PC-3 (cell line): ENCODE measurements at regions of chr11 and their contacts with region 1.

Region 1: GRCh38 chr11:108121274-108122155 is at the start of gene ACAT1:
- DNase-seq: peak; percentile 98
- ATAC-seq: peak; percentile 96
- H3K4me3 ChIP-seq: peak within 1 kb of the TSS; percentile 74
- H3K27ac ChIP-seq: peak within 1 kb of the TSS; percentile 21
- H3K4me1 ChIP-seq: peaks cover 24% of the 10 kb centered on the region
- H3K27me3 ChIP-seq: no peaks in the 10 kb centered on the region
- CTCF ChIP-seq: no peak
- total RNA-seq, gene ACAT1: 180 and 212 TPM in 2 replicates

Region 2: GRCh38 chr11:108135845-108136544 is 14.5 kb after region 1 on chr11:
- CTCF ChIA-PET with region 1: no interaction called
- POLR2A ChIA-PET with region 1: no interaction called
- intact Hi-C with region 1: no loop called
- DNase-seq: peak; percentile 57
- ATAC-seq: peak; percentile 49
- H3K4me3 ChIP-seq: no peak overlapping the region
- H3K27ac ChIP-seq: no peak overlapping the region
- H3K4me1 ChIP-seq: 0 out of 2 replicates have a peak, but pooled peaks cover 3% of the 10 kb centered on the region
- H3K27me3 ChIP-seq: no peaks in the 10 kb centered on the region
- CTCF ChIP-seq: peak; percentile 59

Region 3: DNA sequence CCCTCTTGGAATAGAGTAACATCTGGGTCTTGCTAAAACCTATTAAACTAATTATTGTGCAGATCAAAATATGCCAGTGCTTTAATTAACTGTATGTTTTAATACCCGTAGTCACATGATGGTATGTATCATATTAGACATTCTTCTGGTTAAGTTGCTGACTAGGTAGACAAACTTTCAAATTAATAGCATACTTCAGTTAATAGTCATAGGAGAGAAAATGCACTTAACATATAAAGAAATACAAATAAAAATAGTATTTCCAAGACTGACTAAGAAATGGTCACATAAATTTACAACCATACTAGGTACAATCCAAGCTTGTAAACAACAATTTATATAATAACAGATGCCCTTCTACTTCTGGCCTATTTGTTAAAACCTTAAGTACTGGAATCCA is 479.6 kb after region 1 on chr11:
- CTCF ChIA-PET with region 1: no interaction called
- POLR2A ChIA-PET with region 1: interaction called, 10 read pairs
- intact Hi-C with region 1: no loop called
- DNase-seq: peak; percentile 68
- ATAC-seq: peak; percentile 82
- H3K4me3 ChIP-seq: no peak overlapping the region
- H3K27ac ChIP-seq: no peak overlapping the region
- H3K4me1 ChIP-seq: peaks cover 19% of the 10 kb centered on the region
- H3K27me3 ChIP-seq: no peaks in the 10 kb centered on the region
- CTCF ChIP-seq: no peak